ENCODE measurements at regions of chr3 and their contacts with region 1.

Region 1: GRCh38 chr3:189233225-189233858 is 61.6 kb downstream of the TPRG1 start:
- DNase-seq: peak; percentile 27
- H3K4me3 ChIP-seq: no peak overlapping the region
- H3K27ac ChIP-seq: no peak overlapping the region
- H3K4me1 ChIP-seq: no peaks in the 10 kb centered on the region
- H3K27me3 ChIP-seq: peaks cover 0 to 4% of the 10 kb centered on the region in 2 experiments
- CTCF ChIP-seq: peak; percentile 35 to 65
- POLR2A ChIP-seq: no peak

Region 2: GRCh38 chr3:189169728-189170127 is 63.6 kb before region 1 on chr3:
- CTCF ChIA-PET with region 1: no interaction called
- POLR2A ChIA-PET with region 1: no interaction called
- dilution Hi-C with region 1: no loop called
- intact Hi-C with region 1: loop called (anchors 5 kb)
- DNase-seq: no peak
- H3K4me3 ChIP-seq: no peak overlapping the region
- H3K27ac ChIP-seq: no peak overlapping the region
- H3K4me1 ChIP-seq: no peaks in the 10 kb centered on the region
- H3K27me3 ChIP-seq: peaks cover 0 to 2% of the 10 kb centered on the region in 2 experiments
- CTCF ChIP-seq: no peak
- POLR2A ChIP-seq: no peak